ENCODE measurements at regions of chr12 and their contacts with region 1.

Region 1: DNA sequence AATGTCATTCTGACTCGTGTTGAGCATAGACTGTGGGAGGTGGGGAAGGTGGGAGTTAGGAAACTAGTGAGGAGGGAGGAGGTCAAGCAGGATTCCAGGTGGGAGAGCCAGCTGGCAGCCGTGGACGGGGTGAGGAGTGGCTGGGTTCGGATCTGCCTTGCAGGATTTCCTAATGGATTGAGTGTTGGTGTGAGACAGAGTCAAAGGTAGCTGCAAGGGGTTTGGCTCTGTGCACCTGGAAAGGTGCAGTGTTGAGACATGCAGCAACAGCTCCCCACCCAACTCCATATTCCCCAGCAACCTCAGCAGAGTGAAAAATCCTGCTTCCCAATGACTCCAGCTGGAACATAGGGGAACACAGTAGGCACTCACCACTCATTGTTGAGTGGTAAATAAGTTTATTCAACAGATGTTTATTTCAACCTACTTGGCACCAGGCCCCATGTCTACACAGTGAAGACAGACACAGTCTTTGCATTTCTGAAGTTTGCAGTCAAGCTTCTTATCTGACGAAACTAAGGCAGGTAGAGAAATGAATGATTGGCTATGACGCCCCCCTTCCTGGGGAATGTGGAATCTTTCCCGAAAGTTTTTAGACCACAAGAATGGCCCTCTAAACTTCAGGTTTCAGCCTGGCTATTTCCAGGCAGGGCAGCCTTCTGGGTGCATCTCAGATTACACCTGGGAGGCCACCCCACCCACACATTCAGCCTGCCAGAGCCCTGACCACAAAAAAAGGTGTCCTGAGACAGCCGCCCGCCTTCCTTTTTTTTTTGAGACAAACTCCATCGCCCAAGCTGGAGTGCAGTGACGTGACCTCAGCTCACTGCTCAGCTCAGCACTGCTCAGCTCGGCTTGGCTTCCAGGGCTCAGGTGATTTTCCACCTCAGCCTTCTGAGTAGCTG is 37.9 kb upstream of the PLEKHG6 start:
- DNase-seq: peak; percentile 99
- H3K4me3 ChIP-seq: peak overlapping the region in 2 of 3 experiments; percentile 10 to 21
- H3K27ac ChIP-seq: peak overlapping the region; percentile 96
- H3K4me1 ChIP-seq: peaks cover 43% of the 10 kb centered on the region
- H3K27me3 ChIP-seq: no peaks in the 10 kb centered on the region
- CTCF ChIP-seq: no peak

Region 2: DNA sequence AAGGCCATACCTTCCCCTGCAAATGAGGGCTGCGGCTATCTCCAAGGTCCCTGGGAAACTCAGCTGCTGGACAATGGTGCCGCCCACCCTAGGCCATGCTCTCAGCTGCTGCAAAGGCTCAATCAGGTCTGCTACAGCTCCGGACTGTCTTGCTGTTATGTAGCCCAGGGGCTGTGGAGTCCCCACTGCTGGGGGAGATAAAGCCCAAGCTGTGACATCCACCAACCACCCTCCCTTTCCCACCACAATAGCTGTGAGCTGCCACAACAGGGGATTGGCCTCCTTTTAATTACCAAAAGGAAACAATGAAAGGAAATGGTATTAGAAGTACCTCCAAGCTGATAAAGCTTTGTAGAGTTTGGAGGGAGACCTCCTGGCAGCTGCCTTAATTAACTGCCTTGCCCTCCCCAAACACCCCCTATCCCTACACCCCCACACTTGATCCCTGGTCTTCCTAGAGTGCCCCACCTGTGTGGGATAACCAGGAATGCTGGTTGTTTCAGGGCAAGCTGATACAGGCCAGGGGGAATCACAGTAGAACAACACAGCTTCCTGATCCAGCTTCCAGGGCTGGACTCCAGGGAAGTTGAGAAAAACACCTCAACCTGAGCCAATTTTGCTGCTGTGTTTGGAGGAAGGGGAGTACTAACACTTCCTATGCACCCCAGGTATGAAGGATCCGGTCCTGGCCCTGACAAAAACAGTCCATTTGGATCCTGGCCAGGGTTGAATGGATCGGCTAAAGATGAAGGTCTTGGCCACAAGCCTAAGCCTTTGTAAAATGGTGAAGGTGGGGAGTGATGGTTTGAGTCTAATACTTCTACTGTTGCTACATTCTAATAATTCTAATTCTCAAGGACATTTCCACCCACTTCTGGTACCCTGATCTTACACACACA is 147.9 kb before region 1 on chr12 and contains the start of gene VWF:
- CTCF ChIA-PET with region 1: no interaction called
- dilution Hi-C with region 1: no loop called
- in situ Hi-C with region 1: no loop called
- intact Hi-C with region 1: no loop called
- DNase-seq: no peak
- H3K4me3 ChIP-seq: no peak within 1 kb of the TSS
- H3K27ac ChIP-seq: no peak within 1 kb of the TSS
- H3K4me1 ChIP-seq: peaks cover 5% of the 10 kb centered on the region
- H3K27me3 ChIP-seq: peaks cover 3% of the 10 kb centered on the region
- CTCF ChIP-seq: no peak
- total RNA-seq, gene VWF: under 0.01 to 0.49 TPM

Region 3: GRCh38 chr12:6224550-6224949 is 48.0 kb before region 1 on chr12:
- CTCF ChIA-PET with region 1: no interaction called
- dilution Hi-C with region 1: loop called (anchors 5 kb)
- in situ Hi-C with region 1: no loop called
- intact Hi-C with region 1: loop called (anchors 2 kb)
- DNase-seq: peak; percentile 86
- H3K4me3 ChIP-seq: no peak overlapping the region
- H3K27ac ChIP-seq: peak overlapping the region; percentile 99
- H3K4me1 ChIP-seq: peaks cover 84% of the 10 kb centered on the region
- H3K27me3 ChIP-seq: no peaks in the 10 kb centered on the region
- CTCF ChIP-seq: no peak

Region 4: GRCh38 chr12:6230321-6231110 is 42.0 kb before region 1 on chr12:
- CTCF ChIA-PET with region 1: interaction called, 6 read pairs
- dilution Hi-C with region 1: loop called (anchors 5 kb)
- in situ Hi-C with region 1: loop called in 1 of 2 experiments (anchors 5 kb)
- intact Hi-C with region 1: loop called (anchors 2 kb)
- DNase-seq: peak; percentile 89
- H3K4me3 ChIP-seq: no peak overlapping the region
- H3K27ac ChIP-seq: peak overlapping the region; percentile 97
- H3K4me1 ChIP-seq: peaks cover 67% of the 10 kb centered on the region
- H3K27me3 ChIP-seq: no peaks in the 10 kb centered on the region
- CTCF ChIP-seq: no peak

Measured in mammary epithelial cell (primary cell).